ENCODE measurements at regions of chr14 and their contacts with region 1.

Region 1: DNA sequence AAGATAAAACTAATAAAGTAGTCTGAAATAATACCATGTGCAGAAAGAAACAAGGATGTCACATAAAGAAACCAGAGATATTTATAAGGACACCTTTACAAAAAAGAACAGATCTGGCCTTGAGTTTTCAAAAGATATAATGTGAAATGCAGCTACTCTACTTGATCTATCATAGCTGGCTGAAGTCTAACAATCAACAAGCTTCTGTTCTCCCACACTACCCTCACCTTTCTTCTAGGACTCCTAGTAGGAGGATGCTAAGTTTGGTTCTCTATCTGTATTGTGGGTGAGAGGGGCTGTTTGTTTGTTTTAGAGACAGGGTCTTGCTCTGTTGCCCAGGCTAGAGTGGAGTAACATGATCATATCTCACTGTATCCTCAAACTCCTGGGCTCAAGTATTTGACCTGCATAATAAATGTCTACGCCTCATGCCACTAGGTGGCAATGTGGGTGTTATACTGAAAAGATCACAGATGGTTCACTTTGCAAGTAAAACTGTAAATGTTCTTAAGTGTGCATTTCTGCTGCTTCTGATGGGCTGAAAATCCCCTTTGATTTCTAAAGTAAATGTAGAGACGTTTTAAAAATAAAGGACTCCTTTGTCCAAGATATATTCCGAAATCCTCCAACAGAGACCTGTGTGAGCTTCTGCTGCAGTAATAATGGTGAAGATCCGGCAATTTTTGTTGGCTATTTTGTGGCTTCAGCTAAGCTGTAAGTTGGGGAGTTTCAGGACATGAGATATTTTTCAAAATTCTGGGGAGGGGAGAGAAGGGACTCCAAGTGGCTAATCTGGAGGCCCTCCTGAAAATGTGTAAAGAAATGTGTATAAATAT is 269.3 kb downstream of the DAD1 start:
- DNase-seq: peak; percentile 29 to 73
- ATAC-seq: peak; percentile 92 to 97
- H3K4me3 ChIP-seq: no peak overlapping the region
- H3K27ac ChIP-seq: no peak overlapping the region
- H3K4me1 ChIP-seq: no peaks in the 10 kb centered on the region; the same call in 2 of the 3 replicates
- CTCF ChIP-seq: peak; percentile 79
- EP300 ChIP-seq: no peak
- POLR2A ChIP-seq: no peak
- RAD21 ChIP-seq: peak; percentile 74 to 79

Region 2: GRCh38 chr14:22296722-22297121 is 23.0 kb before region 1 on chr14:
- CTCF ChIA-PET with region 1: interaction called, 19 read pairs
- POLR2A ChIA-PET with region 1: no interaction called
- DNase-seq: peak in 1 of 2 experiments; percentile 53
- ATAC-seq: peak in 1 of 2 experiments; percentile 73; a peak in 3 of 6 replicates
- H3K4me3 ChIP-seq: no peak overlapping the region
- H3K27ac ChIP-seq: no peak overlapping the region
- H3K4me1 ChIP-seq: peaks cover 30% of the 10 kb centered on the region
- CTCF ChIP-seq: no peak
- EP300 ChIP-seq: no peak
- POLR2A ChIP-seq: no peak
- RAD21 ChIP-seq: no peak

Region 3: DNA sequence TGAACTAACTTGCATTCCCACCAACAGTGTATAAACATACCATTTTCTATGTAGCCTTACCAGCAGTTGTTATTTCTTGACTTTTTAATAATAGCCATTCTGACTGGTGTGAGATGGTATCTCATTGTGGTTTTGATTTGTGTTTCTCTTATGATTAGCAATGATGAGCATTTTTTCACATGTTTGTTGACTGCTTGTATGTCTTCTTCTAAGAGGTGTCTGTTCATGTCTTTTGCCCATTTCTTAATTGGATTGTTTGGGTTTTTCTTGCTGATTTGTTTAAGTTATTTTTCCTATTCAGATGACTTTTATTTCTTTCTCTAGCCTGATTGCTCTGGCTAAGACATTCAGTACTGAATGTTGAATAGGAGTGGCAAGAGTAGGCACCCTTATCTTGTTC is 39.0 kb after region 1 on chr14:
- CTCF ChIA-PET with region 1: interaction called, 18 read pairs
- POLR2A ChIA-PET with region 1: no interaction called
- DNase-seq: no peak
- ATAC-seq: no peak
- H3K4me3 ChIP-seq: no peak overlapping the region
- H3K27ac ChIP-seq: no peak overlapping the region
- H3K4me1 ChIP-seq: no peaks in the 10 kb centered on the region
- CTCF ChIP-seq: no peak
- EP300 ChIP-seq: no peak
- POLR2A ChIP-seq: no peak
- RAD21 ChIP-seq: no peak

Region 4: DNA sequence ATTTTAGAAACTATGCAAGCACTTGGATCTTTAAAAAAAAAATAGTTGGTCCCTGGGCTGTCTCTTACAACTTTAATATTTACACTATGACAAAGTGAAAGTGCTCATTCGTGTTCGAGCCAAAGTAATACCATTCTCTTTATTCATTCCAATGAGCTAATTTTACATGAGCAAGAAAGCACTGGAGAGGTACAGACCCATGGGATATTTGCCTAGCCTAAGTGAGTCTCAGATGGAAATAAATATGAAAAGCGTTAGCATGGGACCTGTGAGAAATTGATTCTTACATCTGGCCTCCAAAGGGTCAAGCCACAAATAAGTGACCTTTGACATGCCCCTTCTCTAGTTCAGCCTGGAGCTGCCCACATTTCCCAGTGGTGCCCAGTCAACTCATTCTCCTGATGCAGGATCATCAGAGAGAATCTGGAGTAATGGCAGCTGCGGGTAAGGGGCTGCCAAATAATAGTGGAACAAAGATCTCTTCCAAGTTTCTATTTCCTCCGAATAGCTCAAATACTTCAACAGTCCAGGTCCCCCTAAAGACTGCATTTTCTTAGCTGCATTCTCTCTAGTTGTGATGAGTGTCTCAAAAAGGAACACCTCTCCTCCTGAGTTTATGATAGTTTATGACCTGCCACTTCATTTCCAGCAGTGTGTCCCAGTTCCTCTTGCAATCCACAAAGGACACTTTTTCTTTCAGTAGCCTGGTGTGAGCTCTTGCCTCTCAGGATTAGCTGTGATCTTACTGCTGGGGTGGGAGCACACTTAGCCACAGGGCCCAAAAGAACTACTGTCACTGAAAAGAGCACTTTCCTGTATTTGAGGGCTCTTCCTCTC is 61.0 kb after region 1 on chr14:
- CTCF ChIA-PET with region 1: interaction called, 138 read pairs
- POLR2A ChIA-PET with region 1: no interaction called
- DNase-seq: no peak
- ATAC-seq: no peak
- H3K4me3 ChIP-seq: no peak overlapping the region
- H3K27ac ChIP-seq: no peak overlapping the region
- H3K4me1 ChIP-seq: 0 out of 3 replicates have a peak, but pooled peaks cover 3% of the 10 kb centered on the region
- CTCF ChIP-seq: no peak
- EP300 ChIP-seq: no peak
- POLR2A ChIP-seq: no peak
- RAD21 ChIP-seq: no peak

Region 5: DNA sequence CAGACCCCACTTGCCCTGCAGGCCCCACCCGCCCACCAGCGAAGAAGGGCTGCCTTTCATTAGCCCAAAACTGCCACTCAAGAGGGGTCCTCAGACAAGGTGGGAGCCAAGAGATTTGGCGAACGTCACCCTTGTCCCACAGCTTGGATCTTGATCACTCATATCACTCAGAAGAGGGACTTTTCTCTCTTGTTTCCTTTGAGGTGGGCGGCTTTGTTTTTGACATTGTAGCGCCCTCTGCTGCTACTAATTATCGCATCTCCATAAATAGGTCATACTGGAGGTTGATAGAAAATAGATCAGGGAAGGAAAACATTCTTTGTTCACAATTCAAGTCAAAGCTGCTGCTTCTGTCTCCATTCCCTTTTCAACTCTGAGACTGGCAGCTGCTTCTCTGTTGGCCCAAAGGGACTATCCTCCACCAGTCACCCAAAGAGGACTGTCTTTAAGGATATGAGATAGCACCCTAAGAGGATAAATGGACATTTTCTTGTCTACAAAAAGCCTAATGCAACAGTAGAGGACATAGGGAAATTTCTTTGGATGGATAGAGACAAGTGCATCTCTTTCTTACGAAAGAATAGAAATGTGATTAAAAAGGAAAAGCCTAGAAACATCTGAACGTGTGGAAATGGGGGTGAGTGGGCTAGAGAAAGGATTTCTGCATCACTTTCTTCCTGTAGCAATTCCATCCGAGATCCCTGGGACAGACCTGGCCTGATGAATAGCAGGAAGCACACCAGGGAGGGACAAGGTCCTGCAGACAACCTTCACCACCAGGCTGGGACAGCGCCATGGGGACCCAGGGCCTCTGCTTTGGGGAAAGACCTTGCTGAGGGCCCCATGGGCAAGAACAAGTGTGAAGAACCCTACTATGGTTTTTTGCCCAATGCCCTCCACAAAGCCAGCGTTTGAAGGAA is 153.5 kb after region 1 on chr14:
- CTCF ChIA-PET with region 1: interaction called, 32 read pairs
- POLR2A ChIA-PET with region 1: no interaction called
- DNase-seq: peak; percentile 21 to 56
- ATAC-seq: peak; percentile 58 to 82; a peak in 3 of 6 replicates
- H3K4me3 ChIP-seq: no peak overlapping the region
- H3K27ac ChIP-seq: no peak overlapping the region
- H3K4me1 ChIP-seq: no peaks in the 10 kb centered on the region
- CTCF ChIP-seq: peak; percentile 71
- EP300 ChIP-seq: no peak
- POLR2A ChIP-seq: no peak
- RAD21 ChIP-seq: peak; percentile 84 to 87

Region 6: GRCh38 chr14:22657861-22658260 is 338.1 kb after region 1 on chr14:
- CTCF ChIA-PET with region 1: no interaction called
- POLR2A ChIA-PET with region 1: no interaction called
- DNase-seq: peak in 1 of 2 experiments; percentile 39
- ATAC-seq: peak in 1 of 2 experiments; percentile 46; a peak in 2 of 6 replicates
- H3K4me3 ChIP-seq: no peak overlapping the region
- H3K27ac ChIP-seq: peak overlapping the region; percentile 15 to 37; a peak in 1 of 6 replicates
- H3K4me1 ChIP-seq: peaks cover 16% of the 10 kb centered on the region; the same call in 2 of the 3 replicates
- CTCF ChIP-seq: peak; percentile 60
- EP300 ChIP-seq: no peak
- POLR2A ChIP-seq: no peak
- RAD21 ChIP-seq: peak; percentile 70 to 72

Measured in A549 (cell line).